A549 (cell line): ENCODE measurements at regions of chr11 and their contacts with region 1.

Region 1: DNA sequence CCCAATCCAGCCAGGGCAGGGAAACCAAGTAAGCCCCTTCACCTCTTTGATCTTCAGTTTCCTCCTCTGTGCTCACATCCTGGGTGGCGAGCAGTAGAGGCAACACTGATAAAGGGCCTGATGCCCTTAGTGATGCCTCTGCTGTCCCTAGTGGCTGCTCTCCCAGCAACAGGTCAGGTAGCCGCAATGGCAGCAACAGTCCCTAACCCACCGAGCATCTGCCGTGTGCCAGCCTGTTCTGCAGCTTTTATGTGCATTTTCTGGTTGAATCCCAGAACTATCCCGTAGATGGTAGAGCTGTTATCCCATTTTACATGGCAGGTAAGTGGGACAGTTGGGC is 5.2 kb downstream of the SCYL1 start:
- DNase-seq: peak in 1 of 2 experiments; percentile 58
- ATAC-seq: peak; percentile 67 to 79
- H3K4me3 ChIP-seq: no peak overlapping the region
- H3K27ac ChIP-seq: no peak overlapping the region
- H3K4me1 ChIP-seq: peaks cover 10% of the 10 kb centered on the region
- CTCF ChIP-seq: no peak
- EP300 ChIP-seq: no peak
- POLR2A ChIP-seq: no peak
- RAD21 ChIP-seq: peak in 1 of 2 experiments; percentile 31; a peak in 2 of 5 replicates

Region 2: DNA sequence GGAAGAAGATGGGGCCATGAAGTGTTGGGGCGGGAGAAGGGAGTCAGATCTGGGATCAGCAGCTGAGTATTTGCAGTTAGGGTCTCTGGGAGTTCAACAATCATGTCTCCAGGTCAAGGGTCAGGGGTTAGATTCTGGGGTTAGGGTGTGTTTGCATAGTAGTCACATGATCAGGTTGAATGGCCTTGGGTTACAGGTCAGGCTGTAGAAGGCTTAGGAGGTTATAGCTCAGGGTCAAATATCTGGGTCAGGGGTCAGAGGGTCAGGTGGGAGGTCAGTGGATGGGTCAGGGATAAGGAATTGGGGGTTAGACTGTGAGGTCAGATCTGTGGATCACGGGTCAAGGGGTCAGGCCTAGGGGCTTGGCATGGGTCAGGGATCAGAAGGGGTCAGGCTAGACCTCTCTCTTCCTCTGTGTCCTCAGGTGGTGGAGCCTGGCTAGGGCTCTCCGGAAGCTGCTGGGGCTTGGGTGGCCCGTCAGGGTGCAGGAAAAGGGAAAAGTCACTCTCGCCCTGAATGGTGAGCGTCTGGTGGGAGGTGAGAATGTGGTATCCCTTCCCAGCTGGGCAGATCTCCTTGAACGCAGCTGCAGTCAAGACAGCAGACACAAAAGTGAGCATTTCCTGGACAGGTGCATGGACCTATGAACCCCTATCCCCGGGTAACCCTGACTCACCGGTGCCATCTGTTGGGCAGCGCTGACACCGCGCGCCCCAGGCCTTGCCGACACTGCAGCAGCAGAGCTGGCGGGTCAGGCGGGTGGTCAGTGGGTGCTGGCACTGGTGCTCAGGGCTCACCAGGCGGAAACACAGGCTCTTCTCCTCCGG is 21.7 kb after region 1 on chr11:
- CTCF ChIA-PET with region 1: interaction called, 14 read pairs
- POLR2A ChIA-PET with region 1: no interaction called
- DNase-seq: peak; percentile 58 to 81
- ATAC-seq: peak; percentile 57 to 72; a peak in 5 of 6 replicates
- H3K4me3 ChIP-seq: no peak overlapping the region
- H3K27ac ChIP-seq: no peak overlapping the region; a peak in 1 of 6 replicates
- H3K4me1 ChIP-seq: peaks cover 50% of the 10 kb centered on the region
- CTCF ChIP-seq: peak; percentile 54
- EP300 ChIP-seq: no peak
- POLR2A ChIP-seq: no peak
- RAD21 ChIP-seq: peak; percentile 42 to 52; a peak in 4 of 5 replicates